PC-9 (cell line): ENCODE measurements at regions of chr3 and their contacts with region 1.

Region 1: DNA sequence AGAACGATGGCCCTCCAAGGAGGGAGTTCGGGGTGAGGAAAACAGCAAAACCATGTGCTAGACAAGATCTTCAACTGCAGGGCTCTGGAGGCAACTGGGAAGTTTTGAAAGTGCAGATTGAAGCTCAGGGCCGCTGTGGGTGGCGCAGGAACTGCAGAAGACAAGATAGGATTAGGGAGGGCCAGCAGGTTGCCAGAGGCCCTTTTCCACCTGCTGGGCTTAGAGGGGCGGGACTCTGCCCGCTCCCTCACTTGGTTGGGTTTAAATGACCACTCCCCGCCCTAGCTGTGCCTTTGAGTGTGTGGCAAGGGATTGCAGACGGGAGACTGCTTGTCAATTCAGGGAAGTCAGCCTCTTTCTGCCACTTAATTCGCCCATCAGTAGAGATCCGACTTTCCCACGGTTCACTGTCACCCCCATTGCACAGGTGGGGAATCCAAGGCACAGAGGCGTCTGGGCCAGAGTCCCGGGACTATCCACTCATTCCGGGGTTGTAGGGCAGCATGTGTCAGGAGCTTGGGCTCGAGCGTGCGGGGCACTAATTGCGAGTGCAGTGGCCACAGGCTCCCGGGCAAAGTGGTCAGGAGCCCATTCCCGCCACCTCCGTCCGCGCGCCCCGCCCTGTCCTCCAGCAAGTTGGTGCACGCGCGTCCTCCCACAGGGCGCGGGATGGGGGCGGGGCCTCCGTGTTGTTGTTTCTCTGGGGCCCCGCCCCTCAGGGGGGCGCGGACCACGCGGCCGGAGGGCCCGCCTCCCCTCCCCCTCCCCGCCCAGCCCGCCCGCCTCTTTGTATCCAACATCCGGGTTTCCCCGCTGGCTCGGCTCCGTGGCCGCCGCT is at the start of gene ACVR2B:
- DNase-seq: peak; percentile 65 to 77
- H3K4me3 ChIP-seq: peak within 1 kb of the TSS; percentile 89
- H3K27ac ChIP-seq: no peak within 1 kb of the TSS
- H3K4me1 ChIP-seq: peaks cover 13% of the 10 kb centered on the region
- H3K27me3 ChIP-seq: no peaks in the 10 kb centered on the region
- CTCF ChIP-seq: no peak
- total RNA-seq, gene ACVR2B: 11.0 and 12.4 TPM in 2 replicates

Region 2: DNA sequence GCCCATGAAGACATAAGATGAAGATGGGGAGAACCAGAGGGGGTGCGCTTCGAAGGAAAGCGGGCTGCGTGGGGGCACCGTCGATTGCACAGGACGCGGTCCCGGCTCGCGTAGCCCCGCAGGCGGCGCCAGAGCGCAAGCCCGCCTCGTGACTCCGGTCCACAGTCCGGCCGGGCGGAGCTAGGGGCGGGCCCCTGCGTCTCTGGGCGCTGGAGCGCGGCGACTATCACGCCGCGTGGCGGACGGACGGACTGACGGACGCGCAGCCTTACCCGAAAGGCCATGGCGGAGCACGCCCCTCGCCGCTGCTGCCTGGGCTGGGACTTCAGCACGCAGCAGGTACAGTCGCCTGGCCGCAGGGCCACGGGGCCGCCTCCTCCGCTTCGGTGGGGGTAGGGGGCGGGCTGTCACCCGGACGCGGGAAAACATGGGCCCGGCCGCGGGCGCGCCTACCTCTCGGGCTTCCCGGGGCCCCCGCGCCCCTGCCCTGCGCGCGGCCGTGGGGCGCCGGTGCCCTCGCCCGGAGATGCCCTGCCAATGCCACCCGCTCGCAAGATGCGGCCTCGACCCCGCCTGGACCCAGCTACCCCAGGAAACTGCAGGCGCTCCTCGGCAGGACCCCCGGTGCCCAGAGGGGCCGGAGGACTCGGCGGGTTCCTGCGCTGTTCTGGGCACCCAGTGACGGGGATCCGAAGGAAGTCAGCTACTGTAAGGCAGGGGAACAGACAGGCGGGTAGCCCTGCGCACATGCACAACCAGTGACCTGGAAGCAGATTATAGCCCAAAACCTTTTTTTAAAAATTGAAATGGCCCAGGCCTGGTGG is 106.5 kb before region 1 on chr3 and contains the start of gene XYLB:
- CTCF ChIA-PET with region 1: interaction called, 6 read pairs
- POLR2A ChIA-PET with region 1: no interaction called
- intact Hi-C with region 1: loop called (anchors 10 kb)
- DNase-seq: peak; percentile 66 to 82
- H3K4me3 ChIP-seq: peak within 1 kb of the TSS; percentile 81
- H3K27ac ChIP-seq: no peak within 1 kb of the TSS
- H3K4me1 ChIP-seq: peaks cover 11% of the 10 kb centered on the region
- H3K27me3 ChIP-seq: no peaks in the 10 kb centered on the region
- CTCF ChIP-seq: peak; percentile 66
- total RNA-seq, gene XYLB: 2.4 and 4.2 TPM in 2 replicates

Region 3: DNA sequence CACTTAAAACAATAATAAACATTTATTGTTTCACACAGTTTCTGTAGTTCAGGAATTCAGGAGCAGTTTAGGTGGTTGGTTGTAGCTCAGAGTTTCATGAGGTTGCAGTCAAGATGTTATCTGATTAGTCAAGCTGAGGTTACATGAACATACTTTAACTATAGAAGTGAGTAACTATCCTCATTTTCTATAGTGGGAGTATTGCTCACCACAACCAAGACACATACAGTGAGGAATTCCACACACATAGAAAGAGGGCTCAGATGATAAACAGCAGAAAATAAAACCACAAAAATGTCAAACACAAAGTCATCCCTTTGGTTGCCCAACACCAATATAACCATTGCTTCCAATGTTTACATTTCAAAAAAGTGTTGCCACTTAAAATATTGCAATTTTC is 584.9 kb after region 1 on chr3:
- CTCF ChIA-PET with region 1: no interaction called
- POLR2A ChIA-PET with region 1: no interaction called
- intact Hi-C with region 1: no loop called
- DNase-seq: peak in 1 of 2 experiments; percentile 44
- H3K4me3 ChIP-seq: no peak overlapping the region
- H3K27ac ChIP-seq: no peak overlapping the region
- H3K4me1 ChIP-seq: no peaks in the 10 kb centered on the region
- H3K27me3 ChIP-seq: peaks cover 4% of the 10 kb centered on the region; the same call in 1 of the 2 replicates
- CTCF ChIP-seq: no peak